CD4-positive, alpha-beta memory T cell (primary cell): ENCODE measurements at regions of chr11 and their contacts with region 1.

Region 1: GRCh38 chr11:11148104-11148509 is 204.9 kb downstream of the CSNK2A3 start:
- DNase-seq: peak in 2 of 5 donors; percentile 24 to 58
- H3K4me3 ChIP-seq: no peak overlapping the region
- H3K4me3 Mint-ChIP-seq: peak overlapping the region in 5 of 8 donors; percentile 37 to 83 (median 44)
- H3K27ac ChIP-seq: no peak overlapping the region
- H3K27ac Mint-ChIP-seq: peak overlapping the region; percentile 31 to 98 (median 95)
- H3K4me1 ChIP-seq: peaks cover 48% of the 10 kb centered on the region
- H3K4me1 Mint-ChIP-seq: peaks cover 40 to 67% (median 47%) of the 10 kb centered on the region in 4 donors
- H3K27me3 ChIP-seq: no peaks in the 10 kb centered on the region
- H3K27me3 Mint-ChIP-seq: no peaks in the 10 kb centered on the region

Region 2: DNA sequence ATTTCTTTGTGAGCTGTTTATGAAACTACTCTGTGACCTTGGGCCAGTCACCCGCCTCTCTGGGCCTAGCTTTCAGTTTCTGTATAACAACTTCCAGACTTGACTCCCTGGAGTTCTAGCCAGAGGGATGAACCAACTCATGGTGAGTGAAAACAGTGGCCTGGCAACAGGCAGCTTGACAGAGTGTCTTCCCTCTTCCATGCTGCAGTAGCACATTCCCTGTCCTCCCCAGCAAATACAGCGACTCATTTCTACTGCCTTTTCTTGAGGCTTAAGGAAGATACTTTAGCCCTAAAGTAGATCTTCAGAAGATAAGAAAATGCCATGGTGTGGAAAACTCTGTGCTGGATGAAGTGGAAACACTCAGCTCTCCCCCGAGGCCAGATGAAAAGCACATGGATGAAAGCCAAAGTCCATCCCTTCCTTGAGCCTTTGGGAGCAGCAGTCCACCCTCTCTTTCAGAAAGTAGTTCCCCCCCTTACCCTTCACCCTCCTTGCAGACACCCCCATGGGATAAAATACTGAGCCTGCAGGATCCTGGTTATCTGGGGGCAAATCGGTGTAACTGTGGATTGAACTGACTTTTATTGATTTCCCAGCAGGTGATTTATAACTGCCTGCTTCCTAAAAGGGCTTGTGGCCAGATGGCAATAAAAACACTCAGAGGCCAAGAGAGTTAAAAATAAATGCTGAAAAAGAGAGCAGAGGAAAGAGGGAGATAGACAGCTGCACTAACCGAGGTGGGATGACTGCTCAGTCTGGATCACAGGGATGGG is 478.7 kb before region 1 on chr11:
- CTCF ChIA-PET with region 1: no interaction called
- POLR2A ChIA-PET with region 1: no interaction called
- intact Hi-C with region 1: no loop called
- DNase-seq: no peak
- H3K4me3 ChIP-seq: no peak overlapping the region
- H3K4me3 Mint-ChIP-seq: no peak overlapping the region
- H3K27ac ChIP-seq: no peak overlapping the region
- H3K27ac Mint-ChIP-seq: no peak overlapping the region
- H3K4me1 ChIP-seq: no peaks in the 10 kb centered on the region
- H3K4me1 Mint-ChIP-seq: peaks cover 0 to 2% (median 0%) of the 10 kb centered on the region in 4 donors
- H3K27me3 ChIP-seq: no peaks in the 10 kb centered on the region
- H3K27me3 Mint-ChIP-seq: peaks cover 14 to 16% of the 10 kb centered on the region in 2 donors

Region 3: GRCh38 chr11:10750838-10751580 is 397.1 kb before region 1 on chr11 and contains the start of gene CTR9:
- CTCF ChIA-PET with region 1: no interaction called
- POLR2A ChIA-PET with region 1: no interaction called
- intact Hi-C with region 1: loop called (anchors 5 kb)
- DNase-seq: peak; percentile 88 to 91 (median 89)
- H3K4me3 ChIP-seq: peak within 1 kb of the TSS; percentile 95 to 96
- H3K4me3 Mint-ChIP-seq: peak within 1 kb of the TSS; percentile 92 to 98 (median 97)
- H3K27ac ChIP-seq: peak within 1 kb of the TSS; percentile 81
- H3K27ac Mint-ChIP-seq: peak within 1 kb of the TSS; percentile 81 to 97 (median 94)
- H3K4me1 ChIP-seq: peaks cover 29% of the 10 kb centered on the region
- H3K4me1 Mint-ChIP-seq: peaks cover 14 to 46% (median 20%) of the 10 kb centered on the region in 4 donors
- H3K27me3 ChIP-seq: no peaks in the 10 kb centered on the region
- H3K27me3 Mint-ChIP-seq: no peaks in the 10 kb centered on the region
- total RNA-seq, gene CTR9: 57.2 to 68.6 TPM

Region 4: DNA sequence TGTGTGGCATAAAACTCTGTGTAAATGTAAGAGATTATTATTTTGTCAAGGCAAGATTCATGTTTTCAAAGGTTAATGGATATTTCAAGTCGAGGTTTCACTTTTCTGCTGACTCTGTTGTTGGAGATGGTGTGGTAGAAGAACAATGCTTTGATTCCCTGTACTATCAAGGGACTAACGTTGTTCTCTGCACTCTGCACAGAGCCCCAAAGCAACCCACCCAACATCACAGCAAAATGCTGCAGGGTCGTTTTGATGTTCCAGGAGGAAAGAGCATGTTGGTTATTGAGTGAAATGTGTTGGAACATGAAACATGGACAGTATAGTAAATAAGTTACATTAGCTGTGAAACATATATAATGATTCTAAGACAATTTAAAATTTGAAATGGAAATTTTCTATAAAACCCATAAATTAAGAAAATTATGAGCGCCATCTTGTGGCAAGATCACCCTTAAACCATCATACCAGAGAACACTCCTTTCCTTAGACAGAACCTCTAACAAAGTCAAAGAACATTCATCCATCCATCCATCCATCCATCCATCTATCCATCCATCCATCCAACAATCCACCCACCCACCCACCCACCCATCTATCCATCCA is 125.9 kb before region 1 on chr11:
- CTCF ChIA-PET with region 1: interaction called, 24 read pairs
- POLR2A ChIA-PET with region 1: no interaction called
- intact Hi-C with region 1: no loop called
- DNase-seq: peak in 2 of 5 donors; percentile 7 to 17
- H3K4me3 ChIP-seq: no peak overlapping the region
- H3K4me3 Mint-ChIP-seq: no peak overlapping the region
- H3K27ac ChIP-seq: no peak overlapping the region
- H3K27ac Mint-ChIP-seq: no peak overlapping the region
- H3K4me1 ChIP-seq: no peaks in the 10 kb centered on the region
- H3K4me1 Mint-ChIP-seq: no peaks in the 10 kb centered on the region
- H3K27me3 ChIP-seq: no peaks in the 10 kb centered on the region
- H3K27me3 Mint-ChIP-seq: peaks cover 0 to 6% of the 10 kb centered on the region in 2 donors

Region 5: DNA sequence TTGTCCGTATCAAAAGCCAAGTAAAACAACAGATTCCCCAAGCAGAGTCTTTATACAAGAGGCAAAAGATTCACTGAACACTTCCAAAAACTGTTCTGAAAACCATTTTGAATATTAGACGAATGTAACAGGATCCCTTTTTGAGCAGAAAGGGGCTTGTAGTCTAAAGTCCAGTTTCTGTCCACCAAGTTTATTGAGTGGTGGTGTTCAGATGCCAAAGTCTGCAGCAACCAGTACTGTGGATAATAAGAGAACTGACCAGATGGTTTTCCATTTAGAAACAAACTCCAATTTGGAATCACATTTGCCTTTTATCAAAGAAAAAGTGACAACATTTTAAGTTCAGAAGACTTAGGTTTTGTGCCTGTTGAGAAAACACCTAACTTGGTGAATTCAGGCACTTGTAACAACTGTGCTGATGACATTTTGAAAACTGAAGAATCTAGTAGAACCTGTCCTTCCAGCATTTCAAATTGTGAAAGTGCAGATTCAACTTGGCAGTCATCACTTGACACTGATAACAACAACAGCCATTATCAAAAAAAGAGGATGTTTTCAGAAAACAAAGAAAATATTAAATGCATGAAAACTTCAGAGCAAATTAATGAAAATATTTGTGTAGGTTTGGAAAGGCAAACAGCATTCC is 12.2 kb before region 1 on chr11:
- CTCF ChIA-PET with region 1: interaction called, 35 read pairs
- POLR2A ChIA-PET with region 1: interaction called, 20 read pairs
- intact Hi-C with region 1: loop called (anchors 1 kb)
- DNase-seq: no peak
- H3K4me3 ChIP-seq: no peak overlapping the region
- H3K4me3 Mint-ChIP-seq: peak overlapping the region in 1 of 8 donors; percentile 40
- H3K27ac ChIP-seq: no peak overlapping the region
- H3K27ac Mint-ChIP-seq: peak overlapping the region in 1 of 7 donors; percentile 42
- H3K4me1 ChIP-seq: peaks cover 14% of the 10 kb centered on the region
- H3K4me1 Mint-ChIP-seq: peaks cover 13 to 22% (median 18%) of the 10 kb centered on the region in 4 donors
- H3K27me3 ChIP-seq: no peaks in the 10 kb centered on the region
- H3K27me3 Mint-ChIP-seq: peaks cover 1 to 6% of the 10 kb centered on the region in 2 donors

Region 6: GRCh38 chr11:11171854-11172253 is 23.7 kb after region 1 on chr11:
- CTCF ChIA-PET with region 1: interaction called, 3 read pairs
- POLR2A ChIA-PET with region 1: interaction called, 10 read pairs
- intact Hi-C with region 1: no loop called
- DNase-seq: peak; percentile 69 to 82 (median 73)
- H3K4me3 ChIP-seq: no peak overlapping the region
- H3K4me3 Mint-ChIP-seq: peak overlapping the region in 2 of 8 donors; percentile 31 to 57
- H3K27ac ChIP-seq: no peak overlapping the region
- H3K27ac Mint-ChIP-seq: peak overlapping the region; percentile 10 to 94 (median 69)
- H3K4me1 ChIP-seq: peaks cover 22% of the 10 kb centered on the region
- H3K4me1 Mint-ChIP-seq: peaks cover 13 to 20% (median 15%) of the 10 kb centered on the region in 4 donors
- H3K27me3 ChIP-seq: no peaks in the 10 kb centered on the region
- H3K27me3 Mint-ChIP-seq: peaks cover 2% of the 10 kb centered on the region in 2 donors

Region 7: GRCh38 chr11:11347592-11347991 is 199.5 kb after region 1 on chr11:
- CTCF ChIA-PET with region 1: no interaction called
- POLR2A ChIA-PET with region 1: no interaction called
- intact Hi-C with region 1: no loop called
- DNase-seq: no peak
- H3K4me3 ChIP-seq: no peak overlapping the region
- H3K4me3 Mint-ChIP-seq: no peak overlapping the region
- H3K27ac ChIP-seq: no peak overlapping the region
- H3K27ac Mint-ChIP-seq: no peak overlapping the region
- H3K4me1 ChIP-seq: no peaks in the 10 kb centered on the region
- H3K4me1 Mint-ChIP-seq: no peaks in the 10 kb centered on the region
- H3K27me3 ChIP-seq: no peaks in the 10 kb centered on the region
- H3K27me3 Mint-ChIP-seq: peaks cover 2 to 4% of the 10 kb centered on the region in 2 donors